GM10248 (cell line): ENCODE measurements at regions of chr4 and their contacts with region 1.

Region 1: DNA sequence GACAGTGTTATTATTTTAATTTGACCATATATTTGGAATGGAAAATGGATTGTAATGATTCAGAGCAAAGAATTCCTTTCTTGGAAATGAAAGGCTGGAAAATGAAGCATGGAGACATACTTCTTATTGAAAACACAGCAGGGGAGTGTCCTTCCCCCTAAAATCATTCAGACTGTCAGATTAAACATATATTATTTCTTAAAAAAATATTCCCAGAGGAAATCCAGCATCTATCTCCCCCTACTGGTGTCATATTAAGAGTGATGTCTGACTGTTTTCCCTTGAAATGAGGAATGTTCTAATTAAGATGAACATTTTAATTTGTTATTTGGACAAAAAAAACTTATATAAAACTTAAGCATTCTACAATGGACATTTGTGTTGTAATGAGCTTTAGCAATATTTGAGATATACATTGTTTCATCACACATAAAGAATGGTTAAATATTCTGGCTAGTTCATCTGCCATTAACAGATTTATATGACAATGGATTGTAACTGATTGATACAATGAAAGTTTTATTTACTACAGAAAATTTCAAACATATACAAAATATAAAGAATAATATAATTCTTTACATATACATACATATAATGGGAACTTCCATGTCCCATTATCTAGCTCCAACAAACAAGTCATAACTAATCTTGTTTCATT is 264.6 kb downstream of the SPRY1 start:
- DNase-seq: no peak
- CTCF ChIP-seq: no peak

Region 2: DNA sequence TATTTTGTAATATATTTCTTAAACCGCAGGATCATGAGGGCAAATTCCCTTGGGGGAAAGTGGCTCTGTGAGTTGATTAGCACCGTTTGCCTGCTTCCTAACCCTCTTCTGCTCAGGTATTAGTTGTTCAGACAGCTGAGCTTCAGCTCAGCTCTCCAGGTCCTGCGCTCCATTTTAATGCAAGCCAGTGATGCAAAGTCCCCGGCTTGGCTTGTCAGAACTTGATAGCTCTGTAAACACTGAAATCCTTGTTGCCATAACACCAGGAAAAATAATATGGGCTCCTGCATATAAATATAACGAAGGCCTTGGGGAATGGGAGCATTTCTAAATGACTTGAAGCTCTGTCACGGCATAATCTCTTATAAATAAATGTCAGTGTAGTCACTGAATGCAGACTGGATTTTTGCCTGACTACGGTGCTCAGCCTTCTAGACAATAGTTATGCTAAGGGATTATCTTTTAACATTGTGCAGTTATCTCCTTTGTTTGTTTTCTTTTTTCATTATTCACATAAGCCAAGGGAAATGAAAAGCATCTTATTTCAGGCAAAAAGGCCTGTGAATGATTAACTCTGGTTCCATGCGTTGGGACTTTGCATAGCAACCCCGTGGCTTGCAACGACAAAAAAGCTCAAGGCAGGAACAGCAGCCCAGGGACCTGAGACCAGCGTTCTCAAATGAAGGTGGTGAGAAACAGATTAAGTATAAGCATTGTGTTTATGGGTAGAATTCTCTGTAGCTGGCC is 11.4 kb before region 1 on chr4:
- CTCF ChIA-PET with region 1: interaction called, 16 read pairs
- POLR2A ChIA-PET with region 1: no interaction called
- DNase-seq: no peak
- CTCF ChIP-seq: no peak

Region 3: DNA sequence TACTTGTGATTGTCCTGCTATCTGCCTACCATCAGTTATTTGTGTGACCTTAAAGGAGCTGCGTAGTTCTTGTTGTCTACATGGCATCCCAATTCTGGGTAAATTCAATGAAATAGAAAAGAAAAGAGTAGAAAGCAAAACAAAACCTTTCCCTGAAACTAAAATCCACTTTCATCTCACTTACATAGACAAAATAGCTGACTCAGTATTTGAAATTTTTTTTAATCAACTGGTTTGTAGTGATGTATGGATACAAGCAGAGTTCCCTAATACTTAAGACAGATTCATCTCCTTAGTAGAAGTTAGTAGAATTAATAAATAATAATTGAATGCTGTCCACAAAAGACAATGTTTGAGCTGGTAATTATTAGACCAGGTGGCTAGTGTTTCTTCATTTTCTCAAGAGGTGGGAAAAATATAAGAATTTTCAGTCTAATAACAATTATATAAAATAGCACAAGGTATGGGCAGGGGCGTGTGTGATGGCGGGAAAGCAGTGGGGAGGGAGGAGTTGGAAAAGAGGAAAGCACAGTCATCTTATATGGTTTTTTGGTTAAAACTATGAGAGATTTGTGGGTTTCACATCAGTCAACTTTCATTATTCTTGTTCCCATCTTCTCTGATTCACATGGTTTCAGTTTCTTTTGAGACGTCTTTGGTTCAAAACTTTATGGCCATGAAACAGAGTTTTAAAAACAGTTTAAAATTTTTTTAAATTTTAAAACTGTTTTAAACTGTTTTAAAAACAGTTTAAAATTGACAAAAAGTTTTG is 10.6 kb after region 1 on chr4:
- CTCF ChIA-PET with region 1: interaction called, 10 read pairs
- POLR2A ChIA-PET with region 1: no interaction called
- DNase-seq: peak; percentile 37
- CTCF ChIP-seq: no peak